ENCODE measurements at regions of chr18 and their contacts with region 1.

Region 1: DNA sequence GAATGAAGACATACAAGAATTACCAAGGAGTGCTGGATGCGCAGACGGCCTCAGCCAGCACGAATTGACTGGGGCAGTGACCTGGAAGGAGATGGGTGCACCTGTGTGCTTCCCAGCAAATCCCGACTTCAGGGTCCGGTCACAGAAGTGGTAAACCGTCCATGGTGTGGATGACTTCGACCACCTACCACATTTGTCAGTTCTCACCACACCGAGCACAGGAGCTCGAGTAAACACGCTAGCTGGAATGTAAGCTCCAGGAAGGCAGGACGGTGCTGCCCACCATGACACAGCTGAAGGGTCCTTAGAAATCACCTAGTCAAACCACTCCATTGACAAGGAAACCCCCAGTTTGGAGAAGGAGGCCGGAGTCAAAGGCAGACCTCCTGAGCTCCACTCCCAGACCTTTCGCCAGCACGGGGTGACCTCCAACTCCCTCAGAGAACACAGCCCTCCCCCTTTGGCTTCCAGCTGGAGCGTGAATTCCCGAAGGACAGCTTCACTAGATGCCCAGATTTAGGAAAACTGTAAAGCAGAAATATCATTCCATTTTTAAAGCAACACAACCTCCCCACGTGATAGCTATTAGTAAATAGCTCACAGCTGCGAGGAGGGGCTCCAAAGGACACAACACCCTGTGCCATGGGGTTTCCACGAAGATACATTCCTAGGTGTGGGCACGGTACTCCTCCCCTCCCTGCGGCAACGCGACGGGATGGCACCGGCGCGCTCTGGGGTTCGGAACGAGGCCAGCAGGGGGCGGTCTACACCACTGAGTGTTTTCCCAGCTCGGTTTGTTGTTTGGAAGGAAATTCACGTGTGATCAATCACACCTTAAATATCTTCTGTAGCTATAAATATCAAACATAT is 34.1 kb upstream of the GNAL start:
- DNase-seq: peak in 9 of 10 donors; percentile 14 to 75 (median 57)
- H3K4me3 ChIP-seq: peak overlapping the region in 29 of 59 donors; percentile 2 to 41 (median 15)
- H3K27ac ChIP-seq: no peak overlapping the region
- H3K27me3 ChIP-seq: peaks cover 0 to 16% (median 0%) of the 10 kb centered on the region in 45 donors
- CTCF ChIP-seq: peak; percentile 62 to 87 (median 78)

Region 2: DNA sequence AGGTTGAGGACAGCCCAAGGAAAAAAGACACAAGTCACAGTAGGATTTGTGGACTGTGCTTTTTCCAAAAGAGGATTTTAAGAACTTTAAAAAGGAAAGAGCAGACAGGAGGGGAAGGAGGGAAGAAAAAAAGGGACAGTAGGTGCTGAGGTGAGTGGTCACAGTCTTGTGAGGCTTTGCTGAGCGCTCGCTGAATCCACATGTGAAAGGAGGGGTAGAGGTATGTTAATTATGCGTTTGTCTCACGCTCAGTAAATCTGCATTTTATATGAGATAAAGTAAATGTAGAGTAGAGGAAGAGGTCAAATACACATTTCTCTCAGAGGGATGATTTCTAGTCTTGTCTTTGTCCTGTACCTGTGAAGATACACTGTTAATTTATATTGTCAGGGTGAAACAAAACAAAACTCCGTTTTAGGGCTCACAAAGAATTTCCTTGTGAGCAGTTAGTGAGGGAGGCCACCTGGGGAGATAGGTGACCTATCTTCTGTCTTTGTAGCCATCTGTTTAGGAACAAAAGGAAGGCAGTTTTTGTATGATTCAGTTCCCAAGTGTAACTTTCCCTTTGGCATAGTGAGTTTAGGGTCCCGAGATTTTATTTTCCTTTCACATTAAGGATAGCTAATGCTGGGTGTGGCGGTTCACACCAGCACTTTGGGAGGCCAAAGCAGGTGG is 59.4 kb after region 1 on chr18:
- intact Hi-C with region 1: no loop called
- DNase-seq: no peak
- H3K4me3 ChIP-seq: no peak overlapping the region
- H3K27ac ChIP-seq: no peak overlapping the region
- H3K27me3 ChIP-seq: peaks cover 0 to 5% (median 0%) of the 10 kb centered on the region in 45 donors
- CTCF ChIP-seq: no peak

Region 3: DNA sequence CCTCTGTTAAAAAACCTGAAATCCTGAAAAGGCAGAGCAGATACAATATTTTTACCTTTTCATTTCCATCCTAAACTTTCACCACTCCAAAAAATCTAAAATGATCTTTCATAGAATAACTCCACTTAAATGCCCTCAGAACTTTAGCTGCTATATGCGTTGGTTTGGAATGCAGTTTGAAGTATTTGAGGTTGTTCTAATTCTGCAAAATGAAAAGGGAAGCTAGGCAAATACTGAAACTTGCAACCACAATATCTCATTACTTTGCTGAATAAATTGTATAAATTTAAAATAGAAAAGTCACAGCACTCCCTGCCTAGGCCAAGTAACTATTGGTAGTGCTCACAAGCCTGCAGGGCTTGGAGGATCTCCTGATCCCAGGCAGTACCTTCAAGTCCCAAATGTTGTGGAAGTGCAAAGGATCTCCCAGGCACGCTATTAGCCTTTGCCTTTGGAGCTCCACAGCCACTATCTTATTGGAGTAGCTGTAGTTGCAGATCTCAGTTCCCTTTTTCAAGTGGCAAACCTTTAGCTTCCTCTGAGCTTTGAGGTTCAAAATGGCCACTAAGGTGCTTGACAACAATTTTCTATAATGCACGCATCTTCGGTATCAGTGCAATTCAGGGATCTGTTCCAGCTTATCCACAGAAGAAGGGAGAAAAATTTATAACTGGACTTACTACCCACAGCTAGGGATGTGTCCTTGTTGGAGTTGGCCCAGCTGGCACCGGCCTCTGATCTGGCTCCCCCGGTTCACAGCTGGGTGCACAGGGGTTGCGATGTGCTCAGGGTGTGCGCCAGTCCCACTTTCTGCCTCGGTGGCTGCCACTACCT is 395.2 kb after region 1 on chr18:
- intact Hi-C with region 1: loop called in 1 of 2 experiments (anchors 10 kb)
- DNase-seq: no peak
- H3K4me3 ChIP-seq: no peak overlapping the region
- H3K27ac ChIP-seq: peak overlapping the region in 1 of 59 donors; percentile 2
- H3K27me3 ChIP-seq: peaks cover 0 to 4% (median 0%) of the 10 kb centered on the region in 45 donors
- CTCF ChIP-seq: no peak

Measured in dorsolateral prefrontal cortex (tissue), 120 donors.